ENCODE measurements at regions of chr13 and their contacts with region 1.

Region 1: DNA sequence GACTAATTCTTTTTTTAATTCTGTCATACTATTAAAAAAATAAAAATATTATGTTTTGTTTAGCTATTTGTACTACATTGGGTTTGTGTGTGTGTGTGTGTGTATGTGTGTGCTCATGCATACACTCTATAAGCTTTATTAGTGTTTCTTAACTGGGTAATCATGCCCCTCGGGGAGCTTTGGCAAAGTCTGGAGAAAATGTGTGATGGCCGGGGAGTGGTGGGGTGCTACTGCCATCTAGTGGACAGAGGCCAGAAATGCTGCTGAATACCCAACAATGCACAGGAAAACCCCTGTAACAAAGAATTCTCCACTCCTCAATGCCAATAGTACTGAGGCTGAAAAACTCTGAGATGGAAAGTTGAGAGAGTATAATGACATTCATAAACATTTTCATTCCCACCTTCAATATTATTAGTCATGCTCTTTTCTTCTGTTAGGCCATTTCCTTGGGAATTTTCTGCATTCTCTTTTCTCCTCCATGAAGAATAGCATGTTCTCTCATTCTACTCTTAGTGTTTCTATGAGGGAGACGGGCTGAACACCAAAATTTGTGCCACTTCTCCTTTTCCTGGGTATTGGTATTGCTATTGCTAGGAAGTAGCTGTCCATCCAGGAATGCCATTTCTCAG is 157.3 kb downstream of the DNAJC3 start:
- DNase-seq: peak; percentile 93
- H3K4me3 Mint-ChIP-seq: no peak overlapping the region
- H3K27ac Mint-ChIP-seq: peak overlapping the region; percentile 42
- H3K4me1 Mint-ChIP-seq: peaks cover 19% of the 10 kb centered on the region
- H3K27me3 Mint-ChIP-seq: no peaks in the 10 kb centered on the region
- CTCF ChIP-seq: peak; percentile 97

Region 2: DNA sequence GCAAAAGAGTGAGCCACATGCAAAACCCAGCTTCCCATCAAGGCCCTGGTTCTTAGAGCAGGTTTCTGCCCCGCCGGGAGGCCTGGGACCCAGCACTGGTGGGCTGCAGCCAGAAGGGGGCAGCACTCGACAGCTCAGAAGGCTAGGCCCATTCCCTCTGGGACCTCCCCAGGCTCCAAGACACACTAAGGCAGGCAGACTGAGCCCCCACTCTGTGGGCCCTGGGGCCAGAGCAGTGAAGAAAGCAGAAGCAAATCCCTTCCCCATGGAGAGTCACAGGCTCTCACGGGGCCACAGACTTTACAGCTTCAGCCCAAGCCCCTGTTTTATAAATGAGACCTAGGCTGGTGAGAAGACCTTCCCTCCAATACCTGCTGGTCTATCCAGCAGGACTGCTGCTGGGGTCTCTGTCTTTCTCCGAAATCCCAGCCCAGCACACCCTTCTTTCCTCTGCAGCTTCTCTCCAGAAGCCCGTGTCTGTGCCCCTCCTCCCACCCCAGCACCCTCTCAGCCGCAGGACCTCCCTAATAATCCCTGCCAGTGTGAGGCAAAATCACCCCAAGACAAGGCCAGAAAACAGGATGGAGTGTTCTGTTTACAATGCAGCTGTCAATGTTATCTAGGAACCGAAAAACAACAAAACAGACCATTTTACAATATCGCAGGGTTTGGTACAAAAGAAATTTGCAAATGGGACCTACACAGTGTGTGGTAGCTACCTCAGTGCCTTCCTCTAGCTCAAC is 642.3 kb before region 1 on chr13:
- CTCF ChIA-PET with region 1: interaction called, 41 read pairs
- POLR2A ChIA-PET with region 1: no interaction called
- intact Hi-C with region 1: loop called (anchors 1 kb)
- DNase-seq: peak; percentile 68
- H3K4me3 Mint-ChIP-seq: no peak overlapping the region
- H3K27ac Mint-ChIP-seq: no peak overlapping the region
- H3K4me1 Mint-ChIP-seq: no peaks in the 10 kb centered on the region
- H3K27me3 Mint-ChIP-seq: no peaks in the 10 kb centered on the region
- CTCF ChIP-seq: peak; percentile 68

Region 3: GRCh38 chr13:95536632-95537241 is 297.5 kb before region 1 on chr13:
- CTCF ChIA-PET with region 1: interaction called, 56 read pairs
- POLR2A ChIA-PET with region 1: no interaction called
- intact Hi-C with region 1: loop called (anchors 2 kb)
- DNase-seq: peak; percentile 68
- H3K4me3 Mint-ChIP-seq: no peak overlapping the region
- H3K27ac Mint-ChIP-seq: no peak overlapping the region
- H3K4me1 Mint-ChIP-seq: peaks cover 30% of the 10 kb centered on the region
- H3K27me3 Mint-ChIP-seq: no peaks in the 10 kb centered on the region
- CTCF ChIP-seq: peak; percentile 42

Region 4: DNA sequence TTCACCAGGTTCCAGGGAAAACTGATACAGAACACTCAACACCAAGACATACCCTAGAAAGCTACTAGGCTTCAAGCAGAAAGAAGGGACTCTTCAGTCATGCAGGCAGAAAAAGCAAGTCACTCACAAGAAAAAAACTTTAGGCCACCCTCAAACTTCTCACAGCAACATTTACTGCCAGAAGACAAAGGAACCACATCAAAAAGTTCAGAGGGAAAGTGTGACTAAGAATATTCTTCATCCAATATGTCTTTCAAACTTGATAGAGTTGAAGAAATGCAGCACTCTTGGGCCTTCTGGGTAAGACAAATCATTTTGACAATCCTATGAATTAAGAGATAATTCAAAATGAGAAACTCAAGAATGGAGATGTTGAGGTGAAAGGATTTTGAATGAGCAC is 197.4 kb before region 1 on chr13:
- CTCF ChIA-PET with region 1: interaction called, 25 read pairs
- POLR2A ChIA-PET with region 1: no interaction called
- intact Hi-C with region 1: no loop called
- DNase-seq: no peak
- H3K4me3 Mint-ChIP-seq: no peak overlapping the region
- H3K27ac Mint-ChIP-seq: no peak overlapping the region
- H3K4me1 Mint-ChIP-seq: no peaks in the 10 kb centered on the region
- H3K27me3 Mint-ChIP-seq: no peaks in the 10 kb centered on the region
- CTCF ChIP-seq: no peak

Region 5: GRCh38 chr13:95698047-95698749 is 136.1 kb before region 1 on chr13:
- CTCF ChIA-PET with region 1: interaction called, 11 read pairs
- POLR2A ChIA-PET with region 1: interaction called, 4 read pairs
- intact Hi-C with region 1: no loop called
- DNase-seq: peak; percentile 70
- H3K4me3 Mint-ChIP-seq: no peak overlapping the region
- H3K27ac Mint-ChIP-seq: peak overlapping the region; percentile 36
- H3K4me1 Mint-ChIP-seq: peaks cover 33% of the 10 kb centered on the region
- H3K27me3 Mint-ChIP-seq: no peaks in the 10 kb centered on the region
- CTCF ChIP-seq: peak; percentile 60

Region 6: DNA sequence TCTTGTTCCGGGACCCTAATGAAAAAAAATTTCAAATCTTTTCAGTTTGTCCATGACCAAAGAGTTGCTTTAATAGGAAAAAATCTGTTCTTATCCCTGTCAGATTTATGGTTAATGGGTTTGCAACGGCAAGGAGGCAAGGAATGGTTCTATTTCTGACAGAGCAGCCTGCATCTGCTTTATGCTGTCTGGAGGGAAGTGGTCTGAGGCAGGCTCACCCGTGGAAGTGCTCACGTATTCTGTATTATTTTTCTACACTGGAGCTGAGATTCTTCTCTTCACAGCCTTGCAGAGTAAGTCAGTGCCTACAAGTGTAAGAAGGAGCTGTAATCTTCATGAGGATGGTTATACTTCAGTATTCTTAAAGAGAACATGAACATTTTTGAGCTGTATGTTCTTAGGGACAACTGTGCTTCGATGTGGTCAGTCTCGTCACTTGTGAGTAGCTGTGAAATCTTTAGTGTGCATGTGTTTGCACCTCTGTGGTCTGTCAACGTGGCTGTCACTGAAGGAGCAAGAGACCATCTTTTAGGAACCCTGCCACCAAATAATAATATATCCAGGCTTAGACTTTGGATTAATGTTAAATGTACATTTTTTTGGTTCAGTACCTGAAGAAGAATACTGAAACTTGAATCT is 43.0 kb before region 1 on chr13:
- CTCF ChIA-PET with region 1: interaction called, 22 read pairs
- POLR2A ChIA-PET with region 1: no interaction called
- intact Hi-C with region 1: no loop called
- DNase-seq: no peak
- H3K4me3 Mint-ChIP-seq: no peak overlapping the region
- H3K27ac Mint-ChIP-seq: no peak overlapping the region
- H3K4me1 Mint-ChIP-seq: no peaks in the 10 kb centered on the region
- H3K27me3 Mint-ChIP-seq: no peaks in the 10 kb centered on the region
- CTCF ChIP-seq: no peak

Measured in MCF 10A (cell line).